PC-9 (cell line): ENCODE measurements at regions of chr7 and their contacts with region 1.

Region 1: DNA sequence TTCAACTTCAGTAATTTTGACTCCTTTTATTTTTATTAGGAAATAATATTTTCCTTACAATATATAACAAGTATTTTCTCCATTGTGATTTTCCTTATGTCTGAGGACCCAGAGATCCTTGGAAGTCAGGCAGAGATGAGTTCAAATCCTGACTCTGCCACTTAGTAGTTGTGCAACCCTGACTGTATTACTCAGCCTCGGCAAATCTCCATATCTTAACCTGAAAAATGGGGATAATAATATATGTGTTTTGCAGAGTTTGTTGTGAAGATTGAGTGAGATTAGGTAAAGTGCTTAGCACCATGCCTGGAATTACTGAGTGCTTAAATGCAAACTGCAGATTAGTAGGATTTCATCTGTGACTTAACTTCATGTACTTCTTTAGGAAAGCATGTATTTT is 120.5 kb upstream of the KLF14 start:
- DNase-seq: no peak
- H3K4me3 ChIP-seq: no peak overlapping the region
- H3K27ac ChIP-seq: peak overlapping the region; percentile 68
- H3K4me1 ChIP-seq: peaks cover 36% of the 10 kb centered on the region
- H3K27me3 ChIP-seq: no peaks in the 10 kb centered on the region
- CTCF ChIP-seq: no peak

Region 2: GRCh38 chr7:130887182-130888016 is 32.9 kb after region 1 on chr7:
- CTCF ChIA-PET with region 1: no interaction called
- POLR2A ChIA-PET with region 1: interaction called, 13 read pairs
- intact Hi-C with region 1: no loop called
- DNase-seq: peak; percentile 71 to 90
- H3K4me3 ChIP-seq: peak overlapping the region; percentile 21; the same call in 1 of the 2 replicates
- H3K27ac ChIP-seq: peak overlapping the region; percentile 76
- H3K4me1 ChIP-seq: peaks cover 85% of the 10 kb centered on the region
- H3K27me3 ChIP-seq: no peaks in the 10 kb centered on the region
- CTCF ChIP-seq: no peak